HepG2 (cell line): ENCODE measurements at regions of chr20 and their contacts with region 1.

Region 1: GRCh38 chr20:58980700-58981627 is at the start of gene NELFCD:
- DNase-seq: peak; percentile 90
- ATAC-seq: peak; percentile 92
- H3K4me3 ChIP-seq: peak within 1 kb of the TSS; percentile 75 to 85 (median 80)
- H3K27ac ChIP-seq: peak within 1 kb of the TSS; percentile 74
- H3K4me1 ChIP-seq: peaks cover 57% of the 10 kb centered on the region
- H3K27me3 ChIP-seq: no peaks in the 10 kb centered on the region; a peak in 1 of 5 replicates
- CTCF ChIP-seq: peak; percentile 31; the same call in 1 of the 2 replicates
- EP300 ChIP-seq: 0 out of 4 replicates have a peak, but pooled peaks of 1 of the 2 experiments have one; percentile 21
- POLR2A ChIP-seq: peak; percentile 78 to 95
- RAD21 ChIP-seq: peak; percentile 38
- total RNA-seq, gene NELFCD: 159 and 160 TPM in 2 replicates

Region 2: DNA sequence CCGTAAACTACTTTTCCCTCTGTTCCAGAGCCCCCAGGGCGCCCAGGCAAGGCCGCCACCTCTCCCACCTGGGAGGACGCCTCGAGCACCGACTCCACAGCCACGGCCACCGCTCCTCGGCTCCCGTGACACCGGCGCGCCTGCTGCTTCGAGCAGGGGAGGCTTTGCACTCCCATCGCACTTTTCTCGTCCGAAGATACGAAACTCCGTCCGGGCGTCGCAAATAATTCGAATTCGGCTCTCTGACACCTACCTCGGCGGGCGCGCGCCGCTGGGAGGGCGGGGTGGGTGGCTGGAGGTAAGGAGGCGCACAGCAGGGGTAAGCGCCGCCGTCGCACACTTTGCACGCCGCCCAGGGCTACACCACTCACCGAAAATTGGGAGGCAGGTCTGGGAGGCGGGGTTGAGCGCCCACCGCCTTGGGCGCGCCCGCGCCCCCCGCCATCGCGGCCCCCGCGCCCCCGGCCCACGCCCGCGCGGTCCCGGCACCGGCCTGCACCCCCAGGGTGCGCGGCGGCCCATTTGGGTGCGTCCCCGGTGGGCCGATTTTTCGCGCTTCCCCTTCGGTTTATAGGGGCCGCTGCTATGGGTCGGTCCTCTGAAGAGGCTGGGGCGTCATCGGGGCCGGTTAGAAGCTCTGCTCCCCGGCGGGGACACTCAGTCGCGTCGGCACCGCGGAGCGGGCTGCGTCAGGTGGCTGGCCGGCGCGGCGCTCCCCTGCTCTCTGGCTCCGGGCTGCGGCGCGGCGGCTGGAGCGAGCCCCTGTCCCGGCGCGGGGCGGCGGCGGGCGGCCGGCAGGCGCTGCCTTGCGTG is 92.2 kb before region 1 on chr20:
- CTCF ChIA-PET with region 1: no interaction called
- POLR2A ChIA-PET with region 1: interaction called, 6 read pairs
- in situ Hi-C with region 1: loop called (anchors 5 kb)
- intact Hi-C with region 1: loop called (anchors 5 kb)
- DNase-seq: peak; percentile 76
- ATAC-seq: peak; percentile 62
- H3K4me3 ChIP-seq: peak overlapping the region; percentile 78 to 98 (median 86)
- H3K27ac ChIP-seq: peak overlapping the region; percentile 49
- H3K4me1 ChIP-seq: peaks cover 24% of the 10 kb centered on the region
- H3K27me3 ChIP-seq: peaks cover 0 to 3% of the 10 kb centered on the region in 2 experiments; a peak in 2 of 5 replicates
- CTCF ChIP-seq: no peak
- EP300 ChIP-seq: no peak
- POLR2A ChIP-seq: peak; percentile 93 to 96
- RAD21 ChIP-seq: peak; percentile 33; the same call in 1 of the 2 replicates

Region 3: DNA sequence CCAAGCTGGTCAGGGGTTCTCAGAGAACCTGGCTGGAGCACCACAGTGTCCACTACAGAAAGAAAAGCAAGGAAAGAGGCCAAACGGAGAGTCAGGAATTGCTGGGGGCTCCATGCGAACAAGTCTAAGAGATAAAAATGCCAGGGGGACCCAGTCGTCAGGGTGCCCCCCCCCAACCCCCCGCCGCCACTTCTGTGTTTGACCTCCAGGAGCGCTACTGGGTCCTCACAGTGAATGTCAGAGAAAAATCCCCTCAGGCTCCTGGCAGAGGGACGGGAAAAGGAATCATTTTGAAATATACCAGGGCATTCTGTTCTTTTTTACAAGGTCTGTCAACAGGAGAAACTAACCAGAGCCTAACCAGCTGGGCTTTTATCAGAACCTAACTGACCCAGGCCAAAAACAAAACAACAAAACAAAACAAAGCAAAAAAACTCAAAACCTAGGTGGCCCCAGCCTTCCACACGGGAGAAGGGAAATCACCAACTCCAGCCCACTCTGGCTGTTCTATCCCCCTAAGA is 17.8 kb before region 1 on chr20:
- CTCF ChIA-PET with region 1: no interaction called
- POLR2A ChIA-PET with region 1: interaction called, 12 read pairs
- in situ Hi-C with region 1: no loop called
- intact Hi-C with region 1: no loop called
- DNase-seq: no peak
- ATAC-seq: peak; percentile 47; the same call in 2 of the 3 replicates
- H3K4me3 ChIP-seq: no peak overlapping the region
- H3K27ac ChIP-seq: no peak overlapping the region
- H3K4me1 ChIP-seq: peaks cover 15% of the 10 kb centered on the region
- H3K27me3 ChIP-seq: peaks cover 7 to 49% of the 10 kb centered on the region in 2 experiments
- CTCF ChIP-seq: no peak
- EP300 ChIP-seq: no peak
- POLR2A ChIP-seq: no peak
- RAD21 ChIP-seq: no peak

Region 4: DNA sequence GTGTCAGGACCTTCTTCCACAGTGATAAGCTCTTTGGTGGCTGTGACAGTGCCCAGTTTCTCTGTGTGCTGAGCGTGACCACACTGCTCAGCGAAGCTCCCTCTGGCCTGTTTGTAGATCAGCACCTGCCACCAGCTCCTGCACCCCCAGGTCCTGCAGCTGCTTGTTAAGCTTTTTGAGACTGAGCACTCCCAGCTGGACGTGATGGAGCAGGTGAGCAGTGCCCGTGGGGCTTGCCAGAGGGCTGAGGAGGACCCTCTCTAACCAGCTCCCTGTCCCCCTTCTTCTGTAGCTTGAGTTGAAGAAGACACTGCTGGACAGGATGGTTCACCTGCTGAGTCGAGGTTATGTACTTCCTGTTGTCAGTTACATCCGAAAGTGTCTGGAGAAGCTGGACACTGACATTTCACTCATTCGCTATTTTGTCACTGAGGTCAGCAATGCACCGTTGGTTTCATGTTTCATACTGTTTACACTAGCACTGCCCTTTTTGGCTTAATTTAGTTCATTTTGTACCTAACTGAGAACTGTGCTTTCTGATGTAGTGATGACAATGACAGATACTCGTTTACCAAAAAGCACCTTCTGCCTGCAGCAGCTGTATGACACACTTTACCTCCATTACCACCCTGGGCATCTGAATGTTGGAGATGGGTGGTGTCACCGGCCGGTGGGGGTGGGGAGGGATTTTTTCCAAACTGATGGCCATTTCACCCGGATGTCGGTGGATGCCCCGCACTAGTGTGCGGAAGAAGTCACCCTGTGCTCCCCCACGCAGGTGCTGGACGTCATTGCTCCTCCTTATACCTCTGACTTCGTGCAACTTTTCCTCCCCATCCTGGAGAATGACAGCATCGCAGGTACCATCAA is 12.6 kb after region 1 on chr20:
- CTCF ChIA-PET with region 1: no interaction called
- POLR2A ChIA-PET with region 1: interaction called, 10 read pairs
- in situ Hi-C with region 1: no loop called
- intact Hi-C with region 1: loop called (anchors 1 kb)
- DNase-seq: no peak
- ATAC-seq: no peak
- H3K4me3 ChIP-seq: no peak overlapping the region
- H3K27ac ChIP-seq: no peak overlapping the region
- H3K4me1 ChIP-seq: peaks cover 67% of the 10 kb centered on the region
- H3K27me3 ChIP-seq: no peaks in the 10 kb centered on the region
- CTCF ChIP-seq: no peak
- EP300 ChIP-seq: no peak
- POLR2A ChIP-seq: no peak
- RAD21 ChIP-seq: no peak

Region 5: GRCh38 chr20:59004763-59005522 is 24.0 kb after region 1 on chr20:
- CTCF ChIA-PET with region 1: no interaction called
- POLR2A ChIA-PET with region 1: interaction called, 10 read pairs
- in situ Hi-C with region 1: no loop called
- intact Hi-C with region 1: no loop called
- DNase-seq: peak; percentile 71
- ATAC-seq: peak; percentile 65
- H3K4me3 ChIP-seq: peak overlapping the region; percentile 13 to 73 (median 20); a peak in 5 of 6 replicates
- H3K27ac ChIP-seq: no peak overlapping the region
- H3K4me1 ChIP-seq: peaks cover 86% of the 10 kb centered on the region
- H3K27me3 ChIP-seq: peaks cover 2 to 27% of the 10 kb centered on the region in 2 experiments
- CTCF ChIP-seq: peak; percentile 9; the same call in 1 of the 2 replicates
- EP300 ChIP-seq: peak in 1 of 2 experiments; percentile 42; a peak in 2 of 4 replicates
- POLR2A ChIP-seq: no peak
- RAD21 ChIP-seq: no peak

Region 6: DNA sequence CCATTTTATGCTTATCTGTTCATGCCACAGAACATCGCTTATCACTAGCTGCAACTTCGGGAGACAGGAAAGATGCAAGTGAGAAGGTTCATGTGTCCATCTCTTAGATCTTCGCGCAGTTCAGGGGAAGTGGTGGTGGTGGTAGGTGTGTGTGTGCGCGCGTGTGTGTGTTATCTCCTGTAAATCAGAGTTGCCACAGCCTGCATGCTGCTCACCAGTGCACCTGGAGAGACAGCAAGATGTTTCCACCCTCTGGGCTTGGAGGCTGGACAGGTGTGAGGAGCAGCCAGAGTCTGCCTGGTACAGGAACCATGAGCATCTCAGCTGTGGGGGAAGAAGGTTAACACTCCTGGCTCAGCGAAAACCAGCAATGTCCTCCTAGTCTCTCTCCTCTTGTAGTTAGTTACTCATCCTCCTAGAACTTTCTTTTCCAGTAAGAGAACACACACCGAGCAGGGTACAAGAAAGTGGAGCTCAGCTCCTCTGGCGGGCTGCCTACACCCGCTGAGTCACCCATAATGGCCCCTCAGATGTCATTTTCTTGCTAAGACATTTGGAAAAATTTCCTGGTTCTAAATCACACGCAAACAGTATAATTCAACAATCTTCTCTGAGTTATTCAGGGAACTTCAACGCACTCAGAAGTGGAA is 33.1 kb after region 1 on chr20:
- CTCF ChIA-PET with region 1: no interaction called
- POLR2A ChIA-PET with region 1: interaction called, 16 read pairs
- in situ Hi-C with region 1: no loop called
- intact Hi-C with region 1: loop called (anchors 5 kb)
- DNase-seq: no peak
- ATAC-seq: no peak
- H3K4me3 ChIP-seq: peak overlapping the region in 2 of 3 experiments; percentile 47 to 62; a peak in 4 of 6 replicates
- H3K27ac ChIP-seq: no peak overlapping the region
- H3K4me1 ChIP-seq: peaks cover 100% of the 10 kb centered on the region
- H3K27me3 ChIP-seq: no peaks in the 10 kb centered on the region
- CTCF ChIP-seq: no peak
- EP300 ChIP-seq: no peak
- POLR2A ChIP-seq: no peak
- RAD21 ChIP-seq: no peak